ENCODE measurements at regions of chr7 and their contacts with region 1.

Region 1: DNA sequence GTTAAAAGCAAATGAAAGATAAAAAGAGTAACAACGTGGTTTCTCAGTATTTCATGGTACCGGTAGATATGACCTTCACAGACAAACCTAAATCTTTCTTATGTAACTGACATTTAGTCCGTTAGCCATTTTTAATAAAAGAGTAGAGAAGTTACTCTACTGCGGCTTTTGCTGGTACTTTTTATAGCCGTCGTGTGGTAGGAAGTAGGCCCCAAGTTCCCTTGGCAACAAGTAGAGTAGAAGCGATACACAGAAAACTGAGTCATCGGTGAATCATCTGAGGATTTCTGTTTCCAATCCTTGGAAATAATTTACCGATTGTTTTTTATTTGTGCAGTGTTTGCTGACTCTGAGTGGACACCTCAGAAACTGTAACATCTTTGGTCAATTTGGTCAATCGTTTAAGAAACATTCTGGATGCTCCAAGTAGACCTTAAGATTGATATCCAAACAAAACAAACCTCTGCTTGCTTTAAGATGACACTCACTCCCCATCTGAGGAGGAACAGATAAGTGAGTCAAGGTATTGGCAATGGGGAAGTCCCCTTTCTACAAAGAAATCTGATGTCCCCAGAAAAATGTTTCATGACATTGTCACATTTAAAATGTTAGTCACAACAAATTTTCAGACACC is 63.9 kb upstream of the AHR start:
- DNase-seq: peak in 2 of 5 donors; percentile 23 to 25
- ATAC-seq: peak; percentile 16 to 67 (median 58)
- H3K4me3 ChIP-seq: peak overlapping the region in 2 of 12 donors; percentile 11 to 30
- H3K27ac ChIP-seq: peak overlapping the region in 6 of 12 donors; percentile 16 to 86 (median 38)
- H3K4me1 ChIP-seq: peaks cover 0 to 42% (median 21%) of the 10 kb centered on the region in 12 donors
- H3K27me3 ChIP-seq: no peaks in the 10 kb centered on the region
- CTCF ChIP-seq: peak in 1 of 12 donors; percentile 5
- POLR2A ChIP-seq: no peak

Region 2: DNA sequence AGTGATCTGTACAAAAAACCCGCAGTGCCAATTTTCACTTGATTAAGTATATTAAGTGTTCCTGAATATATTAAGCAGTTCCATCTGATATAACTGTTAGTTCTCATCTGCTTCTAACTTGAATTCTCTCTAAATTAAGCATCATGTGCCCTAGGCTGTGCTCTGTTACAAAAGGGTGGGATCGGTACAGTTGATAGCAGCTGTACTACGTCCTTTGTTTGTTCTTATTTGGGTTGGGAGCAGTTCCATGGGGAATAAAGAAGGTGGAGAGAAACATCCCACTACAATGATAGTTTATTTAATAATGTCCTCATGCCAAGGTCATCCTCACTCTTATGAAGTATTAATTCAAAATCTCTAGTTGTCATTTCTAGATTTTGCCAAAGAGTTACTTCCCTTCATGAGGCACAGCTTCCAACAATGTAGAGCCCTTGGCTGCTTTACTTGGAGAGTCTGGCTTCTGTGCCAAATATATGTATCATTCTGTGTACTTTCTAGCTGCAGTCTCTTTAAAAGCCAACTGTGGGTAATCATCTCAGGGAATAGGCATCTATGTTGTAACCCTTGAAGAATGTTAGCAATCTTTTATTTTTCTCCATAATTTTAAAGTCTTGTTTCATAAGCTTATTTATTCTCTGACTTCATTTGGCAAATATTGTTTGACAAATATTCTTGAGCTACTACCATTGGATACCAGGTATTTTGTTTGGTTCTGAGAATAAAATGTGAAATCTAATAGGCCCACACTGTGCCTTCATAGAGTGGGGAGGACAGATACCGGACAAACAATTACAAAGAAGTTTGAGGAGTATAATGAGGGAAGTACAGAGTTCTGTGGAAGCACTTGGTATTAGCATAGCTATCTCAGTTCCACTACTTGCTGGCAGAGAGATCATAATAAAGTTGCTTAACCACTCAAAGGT is 41.5 kb after region 1 on chr7:
- intact Hi-C with region 1: loop called in 3 of 10 experiments (anchors 5 to 10 kb)
- DNase-seq: no peak
- ATAC-seq: peak; percentile 92 to 97 (median 94)
- H3K4me3 ChIP-seq: no peak overlapping the region
- H3K27ac ChIP-seq: peak overlapping the region; percentile 24 to 72 (median 58)
- H3K4me1 ChIP-seq: peaks cover 0 to 30% (median 17%) of the 10 kb centered on the region in 12 donors
- H3K27me3 ChIP-seq: no peaks in the 10 kb centered on the region
- CTCF ChIP-seq: no peak
- POLR2A ChIP-seq: no peak

Region 3: GRCh38 chr7:17289074-17289645 is 54.6 kb after region 1 on chr7:
- intact Hi-C with region 1: loop called in 1 of 10 experiments (anchors 10 kb)
- DNase-seq: peak in 4 of 5 donors; percentile 59 to 76 (median 68)
- ATAC-seq: peak; percentile 78 to 94 (median 86)
- H3K4me3 ChIP-seq: no peak overlapping the region
- H3K27ac ChIP-seq: peak overlapping the region in 9 of 12 donors; percentile 2 to 63 (median 53)
- H3K4me1 ChIP-seq: peaks cover 0 to 24% (median 14%) of the 10 kb centered on the region in 12 donors
- H3K27me3 ChIP-seq: no peaks in the 10 kb centered on the region
- CTCF ChIP-seq: no peak
- POLR2A ChIP-seq: no peak

Measured in heart left ventricle (tissue), 16 donors.